T-cell (primary cell): ENCODE measurements at regions of chr10 and their contacts with region 1.

Region 1: GRCh38 chr10:110569120-110569519 is 1.6 kb downstream of the SMC3 start:
- DNase-seq: no peak
- ATAC-seq: no peak
- H3K4me3 ChIP-seq: peak overlapping the region in 1 of 2 donors; percentile 94
- H3K4me3 Mint-ChIP-seq: peak overlapping the region; percentile 94 to 96 (median 95)
- H3K27ac ChIP-seq: no peak overlapping the region
- H3K27ac Mint-ChIP-seq: no peak overlapping the region
- H3K4me1 ChIP-seq: peaks cover 20 to 32% of the 10 kb centered on the region in 2 experiments
- H3K4me1 Mint-ChIP-seq: peaks cover 43 to 57% (median 55%) of the 10 kb centered on the region in 3 donors
- H3K27me3 ChIP-seq: peaks cover 0 to 4% of the 10 kb centered on the region in 2 experiments
- H3K27me3 Mint-ChIP-seq: peaks cover 4 to 5% of the 10 kb centered on the region in 2 donors

Region 2: DNA sequence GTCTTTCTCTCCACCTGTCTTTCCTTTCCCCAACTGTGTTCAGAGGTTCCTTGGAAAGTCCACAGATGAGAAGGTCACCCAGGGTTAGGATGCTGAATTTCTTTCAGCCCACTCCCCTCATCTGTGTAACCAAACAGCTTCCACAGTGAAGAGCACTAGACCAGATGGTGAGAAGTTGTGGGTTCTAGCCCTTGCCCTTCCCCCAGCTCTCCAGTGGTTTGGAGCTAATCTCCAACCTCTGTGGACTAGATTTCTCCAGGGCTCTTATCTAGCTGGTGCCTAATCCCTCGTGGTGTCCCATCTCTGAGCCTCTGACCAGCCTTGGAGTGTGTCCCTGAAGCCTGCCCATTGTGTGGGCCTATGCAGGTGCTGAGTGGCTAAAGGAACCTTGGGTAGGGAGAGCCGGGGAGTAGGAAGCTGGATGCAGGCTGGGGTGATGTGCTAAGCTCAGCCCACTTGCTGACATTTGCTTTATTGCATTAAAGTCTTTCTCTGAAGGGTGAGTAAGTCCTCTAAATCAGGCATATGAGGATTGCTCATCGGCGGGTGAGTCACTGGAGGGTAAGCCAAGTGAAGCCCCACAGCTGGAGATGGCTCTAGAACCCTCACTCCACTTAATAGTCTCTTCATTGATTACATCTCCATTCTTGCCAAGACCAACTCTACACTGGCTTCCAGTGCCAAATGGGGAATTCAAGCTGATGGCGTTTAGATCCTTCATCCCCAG is 56.5 kb before region 1 on chr10:
- CTCF ChIA-PET with region 1: no interaction called
- POLR2A ChIA-PET with region 1: no interaction called
- DNase-seq: no peak
- ATAC-seq: peak in 2 of 4 experiments; percentile 48 to 54
- H3K4me3 ChIP-seq: no peak overlapping the region
- H3K4me3 Mint-ChIP-seq: no peak overlapping the region
- H3K27ac ChIP-seq: no peak overlapping the region
- H3K27ac Mint-ChIP-seq: peak overlapping the region in 1 of 2 donors; percentile 51
- H3K4me1 ChIP-seq: no peaks in the 10 kb centered on the region
- H3K4me1 Mint-ChIP-seq: peaks cover 0 to 23% (median 14%) of the 10 kb centered on the region in 3 donors
- H3K27me3 ChIP-seq: no peaks in the 10 kb centered on the region
- H3K27me3 Mint-ChIP-seq: no peaks in the 10 kb centered on the region

Region 3: DNA sequence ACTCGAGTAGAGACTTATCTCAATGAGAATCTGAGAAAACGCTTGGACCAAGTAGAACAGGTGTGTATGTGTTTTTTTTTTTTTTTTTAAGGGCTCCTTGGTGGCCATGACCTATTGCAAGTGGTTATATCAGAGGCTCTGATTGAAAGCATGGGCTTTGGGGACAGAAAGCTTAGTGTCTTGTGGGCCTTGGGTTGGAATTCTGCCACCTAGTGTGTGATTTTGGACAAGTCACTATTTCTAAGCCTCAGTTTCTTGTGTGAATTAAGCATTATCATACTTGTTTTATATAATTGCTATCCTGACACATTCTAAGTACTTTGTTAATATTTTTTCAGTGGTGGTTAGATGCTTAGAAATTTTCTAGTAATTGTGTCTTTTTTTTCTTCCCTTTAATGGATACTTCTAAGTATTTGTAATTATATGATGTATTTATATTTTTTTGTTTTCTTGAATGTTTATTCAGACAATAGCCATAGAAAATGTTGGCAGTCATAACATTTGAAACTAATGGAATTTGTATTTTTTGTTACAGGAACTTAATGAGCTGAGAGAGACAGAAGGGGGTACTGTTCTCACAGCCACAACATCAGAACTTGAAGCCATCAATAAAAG is 31.5 kb after region 1 on chr10:
- CTCF ChIA-PET with region 1: interaction called in 1 of 2 experiments, 5 read pairs
- POLR2A ChIA-PET with region 1: interaction called in 1 of 2 experiments, 19 read pairs
- DNase-seq: peak in 14 of 35 experiments; percentile 8 to 70 (median 14)
- ATAC-seq: peak in 2 of 4 experiments; percentile 32 to 47
- H3K4me3 ChIP-seq: no peak overlapping the region
- H3K4me3 Mint-ChIP-seq: no peak overlapping the region
- H3K27ac ChIP-seq: no peak overlapping the region
- H3K27ac Mint-ChIP-seq: no peak overlapping the region
- H3K4me1 ChIP-seq: no peaks in the 10 kb centered on the region
- H3K4me1 Mint-ChIP-seq: no peaks in the 10 kb centered on the region
- H3K27me3 ChIP-seq: no peaks in the 10 kb centered on the region
- H3K27me3 Mint-ChIP-seq: no peaks in the 10 kb centered on the region

Region 4: DNA sequence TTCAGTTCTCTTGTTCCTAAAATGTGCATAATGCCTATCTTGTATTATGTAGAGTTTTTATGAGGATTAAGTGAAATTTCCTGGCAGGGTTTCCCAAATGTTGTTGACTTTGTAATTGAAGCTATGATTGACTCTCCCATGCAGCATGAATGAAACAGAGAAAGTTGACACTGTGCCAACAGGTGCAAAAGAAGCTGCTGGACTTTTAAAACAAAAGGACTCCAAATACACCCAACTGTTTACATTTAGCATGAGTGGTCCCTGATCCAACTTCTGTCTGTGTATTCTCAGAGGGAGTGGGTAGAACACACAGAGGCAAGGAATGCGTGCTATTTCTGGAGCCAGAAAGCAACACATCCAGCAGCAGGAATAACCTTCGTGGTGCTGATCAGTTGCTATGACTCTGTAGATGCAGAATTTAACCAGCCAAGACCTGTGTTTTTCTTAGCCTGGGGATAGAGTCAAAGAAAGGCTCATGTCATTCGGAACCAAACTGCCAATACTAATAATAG is 60.6 kb after region 1 on chr10:
- CTCF ChIA-PET with region 1: no interaction called
- POLR2A ChIA-PET with region 1: no interaction called
- DNase-seq: no peak
- ATAC-seq: no peak
- H3K4me3 ChIP-seq: no peak overlapping the region
- H3K4me3 Mint-ChIP-seq: no peak overlapping the region
- H3K27ac ChIP-seq: no peak overlapping the region
- H3K27ac Mint-ChIP-seq: no peak overlapping the region
- H3K4me1 ChIP-seq: no peaks in the 10 kb centered on the region
- H3K4me1 Mint-ChIP-seq: no peaks in the 10 kb centered on the region
- H3K27me3 ChIP-seq: peaks cover 0 to 4% of the 10 kb centered on the region in 2 experiments
- H3K27me3 Mint-ChIP-seq: peaks cover 3 to 12% of the 10 kb centered on the region in 2 donors